Activated CD8-positive, alpha-beta T cell treated with anti-CD3 and anti-CD28 coated beads, Interleukin-2, amount 10 ng/mL, durations not matched to agents 7 days and 5 days (primary cell): ENCODE measurements at regions of chr19 and their contacts with region 1.

Region 1: GRCh38 chr19:45469132-45469944 is 1.5 kb downstream of the FOSB start:
- DNase-seq: peak; percentile 96
- ATAC-seq: peak; percentile 28
- H3K4me3 Mint-ChIP-seq: peak overlapping the region; percentile 87
- H3K27ac Mint-ChIP-seq: peak overlapping the region; percentile 95
- H3K4me1 Mint-ChIP-seq: peaks cover 38% of the 10 kb centered on the region
- H3K27me3 Mint-ChIP-seq: peaks cover 37% of the 10 kb centered on the region

Region 2: GRCh38 chr19:45450012-45450333 is 19.4 kb before region 1 on chr19:
- CTCF ChIA-PET with region 1: interaction called, 21 read pairs
- POLR2A ChIA-PET with region 1: interaction called, 13 read pairs
- DNase-seq: no peak
- ATAC-seq: peak; percentile 41
- H3K4me3 Mint-ChIP-seq: peak overlapping the region; percentile 92
- H3K27ac Mint-ChIP-seq: peak overlapping the region; percentile 99
- H3K4me1 Mint-ChIP-seq: peaks cover 52% of the 10 kb centered on the region
- H3K27me3 Mint-ChIP-seq: peaks cover 6% of the 10 kb centered on the region

Region 3: DNA sequence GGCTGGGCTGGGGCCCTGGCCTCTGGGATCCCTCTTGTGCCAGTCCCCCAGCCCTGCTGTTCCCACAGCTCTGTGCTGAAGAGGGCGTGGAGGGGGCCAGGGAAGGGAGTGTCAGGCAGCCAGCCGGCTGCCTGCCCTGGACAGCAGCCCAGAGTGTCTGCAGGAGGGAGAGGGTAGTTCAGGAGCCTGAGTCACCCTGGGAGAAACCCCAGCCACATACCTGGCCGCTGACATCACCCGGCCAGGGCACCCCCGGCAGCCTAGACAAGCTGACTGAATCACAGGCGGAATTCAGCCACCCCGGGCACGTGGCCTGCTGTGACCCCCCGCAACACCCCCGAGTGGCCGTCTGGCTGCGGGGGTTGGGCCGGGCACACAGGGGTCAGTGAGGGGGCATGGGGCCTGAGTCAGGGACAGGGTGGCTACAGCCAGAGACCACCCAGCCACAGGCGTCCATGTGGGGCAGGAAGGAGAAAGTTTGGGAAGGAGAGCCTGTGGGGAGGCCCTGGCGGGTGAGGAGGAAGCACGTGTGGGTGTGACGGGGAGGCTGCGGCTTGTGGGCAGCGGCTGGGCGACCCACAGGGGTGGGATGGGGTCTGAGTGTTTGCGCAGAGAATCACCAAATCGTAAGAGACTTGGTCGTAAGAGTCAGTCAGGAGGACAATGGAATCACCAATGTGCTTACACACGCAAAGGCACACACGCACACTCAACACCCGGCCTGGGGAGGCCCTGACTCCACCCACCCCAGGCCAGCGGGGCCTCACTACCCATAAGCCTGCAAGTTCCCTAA is 13.4 kb before region 1 on chr19:
- CTCF ChIA-PET with region 1: interaction called, 21 read pairs
- POLR2A ChIA-PET with region 1: interaction called, 13 read pairs
- DNase-seq: peak; percentile 58
- ATAC-seq: peak; percentile 48
- H3K4me3 Mint-ChIP-seq: peak overlapping the region; percentile 12
- H3K27ac Mint-ChIP-seq: no peak overlapping the region
- H3K4me1 Mint-ChIP-seq: peaks cover 34% of the 10 kb centered on the region
- H3K27me3 Mint-ChIP-seq: peaks cover 12% of the 10 kb centered on the region

Region 4: DNA sequence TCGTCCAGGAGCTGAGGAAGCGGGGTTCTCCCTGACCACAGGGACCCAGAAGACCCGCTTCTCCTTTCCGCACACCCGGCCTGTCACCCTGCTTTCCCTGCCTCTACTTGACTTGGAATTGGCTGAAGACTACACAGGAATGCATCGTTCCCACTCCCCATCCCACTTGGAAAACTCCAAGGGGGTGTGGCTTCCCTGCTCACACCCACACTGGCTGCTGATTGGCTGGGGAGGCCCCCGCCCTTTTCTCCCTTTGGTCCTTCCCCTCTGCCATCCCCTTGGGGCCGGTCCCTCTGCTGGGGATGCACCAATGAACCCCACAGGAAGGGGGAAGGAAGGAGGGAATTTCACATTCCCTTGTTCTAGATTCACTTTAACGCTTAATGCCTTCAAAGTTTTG is 56.8 kb after region 1 on chr19:
- CTCF ChIA-PET with region 1: no interaction called
- POLR2A ChIA-PET with region 1: no interaction called
- DNase-seq: no peak
- ATAC-seq: no peak
- H3K4me3 Mint-ChIP-seq: no peak overlapping the region
- H3K27ac Mint-ChIP-seq: no peak overlapping the region
- H3K4me1 Mint-ChIP-seq: peaks cover 28% of the 10 kb centered on the region
- H3K27me3 Mint-ChIP-seq: peaks cover 2% of the 10 kb centered on the region